ENCODE measurements at regions of chr19 and their contacts with region 1.

Region 1: GRCh38 chr19:36652958-36653357 is 13.7 kb downstream of the ZNF461 start:
- DNase-seq: no peak
- CTCF ChIP-seq: no peak

Region 2: GRCh38 chr19:36605101-36605876 is 47.7 kb before region 1 on chr19 and contains the start of gene ZNF382:
- CTCF ChIA-PET with region 1: no interaction called
- POLR2A ChIA-PET with region 1: interaction called, 10 read pairs
- DNase-seq: peak; percentile 94
- CTCF ChIP-seq: no peak